Calu3 (cell line): ENCODE measurements at regions of chr10 and their contacts with region 1.

Region 1: GRCh38 chr10:102170602-102171001 is 18.4 kb downstream of the NOLC1 start:
- DNase-seq: no peak
- H3K4me3 Mint-ChIP-seq: no peak overlapping the region
- H3K27ac Mint-ChIP-seq: no peak overlapping the region
- H3K4me1 Mint-ChIP-seq: no peaks in the 10 kb centered on the region
- H3K27me3 Mint-ChIP-seq: no peaks in the 10 kb centered on the region
- CTCF ChIP-seq: no peak

Region 2: DNA sequence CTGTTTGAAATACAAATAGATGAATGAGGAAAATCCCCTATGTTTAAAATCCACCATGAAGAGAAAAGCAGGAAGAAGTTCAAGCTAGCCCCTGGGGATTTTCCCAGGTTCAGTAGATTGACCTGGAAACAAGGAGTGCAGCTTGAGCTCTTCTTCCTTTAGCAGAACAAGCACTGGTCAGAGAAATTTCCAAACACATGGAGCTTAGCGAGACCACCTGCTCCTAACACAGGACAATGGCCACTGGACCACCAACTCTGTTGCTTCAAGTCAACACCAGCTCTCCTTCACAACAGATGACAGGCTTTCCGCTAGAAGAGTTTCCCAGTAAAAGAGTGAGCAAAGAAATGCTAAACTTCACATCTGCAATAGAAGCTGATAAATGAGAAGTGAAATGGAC is 466.3 kb before region 1 on chr10:
- CTCF ChIA-PET with region 1: no interaction called
- intact Hi-C with region 1: no loop called
- DNase-seq: no peak
- H3K4me3 Mint-ChIP-seq: no peak overlapping the region
- H3K27ac Mint-ChIP-seq: no peak overlapping the region
- H3K4me1 Mint-ChIP-seq: peaks cover 8% of the 10 kb centered on the region
- H3K27me3 Mint-ChIP-seq: no peaks in the 10 kb centered on the region
- CTCF ChIP-seq: no peak

Region 3: DNA sequence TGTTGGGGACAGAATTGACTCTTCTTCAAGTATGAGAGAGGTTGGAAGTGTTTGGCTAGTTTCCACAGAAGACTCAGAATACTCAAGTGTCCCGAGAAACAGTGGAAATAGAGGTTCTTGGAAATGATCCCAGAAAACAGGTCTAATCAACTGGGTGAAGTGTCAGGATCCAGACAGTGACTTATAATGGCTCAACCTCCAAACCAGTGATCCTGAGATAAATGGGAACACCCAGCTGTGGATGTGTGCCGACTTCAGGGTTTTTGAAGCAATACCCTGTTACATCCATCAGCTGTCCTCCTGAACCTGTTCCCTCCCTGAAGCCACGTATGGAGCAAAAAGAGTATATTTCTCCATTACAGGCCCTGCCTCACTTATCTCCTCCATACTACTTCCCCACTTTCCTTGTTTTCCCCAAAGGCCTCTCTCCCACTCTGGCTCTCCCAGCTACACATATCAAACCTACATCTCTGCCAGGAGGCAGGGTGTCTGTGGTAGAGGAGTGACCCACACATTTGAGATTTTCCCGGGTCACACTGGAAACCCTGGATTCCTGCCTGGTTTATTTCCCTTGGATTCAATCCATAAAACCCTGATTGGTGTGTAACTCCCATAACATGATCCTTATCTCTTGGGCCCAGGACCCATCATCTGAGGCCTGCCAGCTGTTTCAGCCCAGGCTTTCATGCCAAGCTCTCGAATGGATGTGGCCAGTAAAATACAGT is 37.9 kb after region 1 on chr10:
- CTCF ChIA-PET with region 1: no interaction called
- intact Hi-C with region 1: no loop called
- DNase-seq: no peak
- H3K4me3 Mint-ChIP-seq: no peak overlapping the region
- H3K27ac Mint-ChIP-seq: no peak overlapping the region
- H3K4me1 Mint-ChIP-seq: no peaks in the 10 kb centered on the region
- H3K27me3 Mint-ChIP-seq: peaks cover 17% of the 10 kb centered on the region
- CTCF ChIP-seq: no peak

Region 4: DNA sequence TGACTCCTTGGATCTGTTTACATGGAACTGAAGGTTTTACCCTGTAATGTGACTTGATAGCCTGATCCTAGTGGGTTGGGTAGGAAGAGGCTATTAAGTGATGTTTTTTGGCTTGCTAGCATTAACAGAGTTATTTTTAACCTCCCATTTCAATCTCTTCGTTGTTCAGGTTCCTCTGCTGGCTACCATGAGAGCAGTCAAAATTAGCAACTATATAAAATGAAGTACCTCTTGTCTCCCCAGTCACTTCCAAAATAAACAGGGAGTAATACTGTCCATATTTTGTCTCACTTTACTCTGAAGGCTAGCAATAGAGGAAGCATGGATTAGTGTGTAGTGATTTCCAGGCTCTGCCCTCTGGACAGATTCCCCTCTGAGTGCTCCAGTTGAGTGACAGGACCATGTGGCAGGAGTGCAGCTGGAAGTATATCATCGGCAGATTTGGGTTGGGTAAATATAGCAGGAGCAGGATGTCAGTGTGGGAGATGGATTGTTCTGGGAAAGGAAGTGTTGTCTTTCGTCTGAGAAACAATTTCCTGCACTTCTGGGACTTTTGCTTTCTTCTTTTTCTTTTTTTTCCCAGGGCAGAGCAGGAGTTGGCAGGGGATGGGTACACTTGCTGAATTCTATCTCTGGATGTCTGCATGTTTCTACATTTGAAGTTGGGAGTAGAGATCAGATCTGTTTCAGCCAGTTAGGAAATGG is 109.9 kb after region 1 on chr10:
- CTCF ChIA-PET with region 1: no interaction called
- intact Hi-C with region 1: no loop called
- DNase-seq: no peak
- H3K4me3 Mint-ChIP-seq: no peak overlapping the region
- H3K27ac Mint-ChIP-seq: no peak overlapping the region
- H3K4me1 Mint-ChIP-seq: no peaks in the 10 kb centered on the region
- H3K27me3 Mint-ChIP-seq: no peaks in the 10 kb centered on the region
- CTCF ChIP-seq: no peak

Region 5: GRCh38 chr10:102352066-102352715 is 181.6 kb after region 1 on chr10:
- CTCF ChIA-PET with region 1: interaction called, 10 read pairs
- intact Hi-C with region 1: no loop called
- DNase-seq: peak; percentile 61
- H3K4me3 Mint-ChIP-seq: no peak overlapping the region
- H3K27ac Mint-ChIP-seq: no peak overlapping the region
- H3K4me1 Mint-ChIP-seq: peaks cover 6% of the 10 kb centered on the region
- H3K27me3 Mint-ChIP-seq: no peaks in the 10 kb centered on the region
- CTCF ChIP-seq: peak; percentile 78